H1 (cell line): ENCODE measurements at regions of chr20 and their contacts with region 1.

Region 1: GRCh38 chr20:41048461-41049301 is 20.1 kb downstream of the TOP1 start:
- DNase-seq: no peak
- H3K4me3 ChIP-seq: peak overlapping the region in 1 of 4 experiments; percentile 3; a peak in 1 of 8 replicates
- H3K27ac ChIP-seq: no peak overlapping the region
- H3K4me1 ChIP-seq: peaks cover 5 to 25% (median 11%) of the 10 kb centered on the region in 4 experiments; a peak in 4 of 7 replicates
- H3K27me3 ChIP-seq: no peaks in the 10 kb centered on the region
- CTCF ChIP-seq: no peak
- EP300 ChIP-seq: no peak
- POLR2A ChIP-seq: no peak
- RAD21 ChIP-seq: no peak

Region 2: GRCh38 chr20:40922865-40923264 is 125.8 kb before region 1 on chr20:
- CTCF ChIA-PET with region 1: no interaction called
- POLR2A ChIA-PET with region 1: no interaction called
- DNase-seq: no peak
- H3K4me3 ChIP-seq: no peak overlapping the region
- H3K27ac ChIP-seq: no peak overlapping the region
- H3K4me1 ChIP-seq: no peaks in the 10 kb centered on the region
- H3K27me3 ChIP-seq: no peaks in the 10 kb centered on the region
- CTCF ChIP-seq: no peak
- EP300 ChIP-seq: no peak
- POLR2A ChIP-seq: no peak
- RAD21 ChIP-seq: no peak

Region 3: DNA sequence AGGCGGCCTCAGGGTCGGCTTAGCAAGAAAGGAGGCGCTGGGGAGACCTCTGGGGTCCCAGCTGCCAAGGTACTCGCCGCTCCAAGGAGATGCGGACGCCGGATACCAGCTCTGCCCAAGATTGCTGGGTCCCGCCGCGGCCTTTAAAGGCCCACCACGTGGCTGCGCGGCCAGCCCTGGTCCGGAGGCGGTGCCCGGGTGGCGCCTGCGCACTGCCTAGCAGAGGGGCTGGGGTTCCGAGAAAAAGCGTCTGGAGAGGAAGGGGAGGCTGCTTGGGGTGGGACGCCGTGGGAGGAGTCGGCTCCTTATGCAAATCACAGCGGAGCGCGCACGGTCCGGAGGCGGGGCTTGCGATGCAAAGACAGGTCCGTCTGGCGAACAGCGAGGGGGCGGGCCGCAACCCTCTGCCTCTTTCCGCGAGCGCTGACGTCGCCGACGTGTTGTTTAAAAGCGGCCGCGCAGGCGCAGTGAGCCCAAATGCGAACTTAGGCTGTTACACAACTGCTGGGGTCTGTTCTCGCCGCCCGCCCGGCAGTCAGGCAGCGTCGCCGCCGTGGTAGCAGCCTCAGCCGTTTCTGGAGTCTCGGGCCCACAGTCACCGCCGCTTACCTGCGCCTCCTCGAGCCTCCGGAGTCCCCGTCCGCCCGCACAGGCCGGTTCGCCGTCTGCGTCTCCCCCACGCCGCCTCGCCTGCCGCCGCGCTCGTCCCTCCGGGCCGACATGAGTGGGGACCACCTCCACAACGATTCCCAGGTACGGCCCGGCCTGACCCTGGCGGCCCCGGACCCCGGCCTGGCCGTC is 20.1 kb before region 1 on chr20 and contains the start of gene TOP1:
- CTCF ChIA-PET with region 1: interaction called, 3 read pairs
- POLR2A ChIA-PET with region 1: interaction called, 45 read pairs
- DNase-seq: peak; percentile 100
- H3K4me3 ChIP-seq: peak within 1 kb of the TSS; percentile 56 to 97 (median 67)
- H3K27ac ChIP-seq: peak within 1 kb of the TSS; percentile 93
- H3K4me1 ChIP-seq: peaks cover 3 to 9% (median 7%) of the 10 kb centered on the region in 4 experiments; a peak in 4 of 7 replicates
- H3K27me3 ChIP-seq: peaks cover 0 to 24% (median 10%) of the 10 kb centered on the region in 4 experiments; a peak in 3 of 7 replicates
- CTCF ChIP-seq: no peak; a peak in 1 of 4 replicates
- EP300 ChIP-seq: 0 out of 3 replicates have a peak, but pooled peaks of 1 of the 2 experiments have one; percentile 45
- POLR2A ChIP-seq: peak; percentile 90 to 97
- RAD21 ChIP-seq: no peak
- total RNA-seq, gene TOP1: 108 and 114 TPM in 2 replicates

Region 4: GRCh38 chr20:41714030-41714429 is 665.3 kb after region 1 on chr20:
- CTCF ChIA-PET with region 1: no interaction called
- POLR2A ChIA-PET with region 1: no interaction called
- DNase-seq: no peak
- H3K4me3 ChIP-seq: no peak overlapping the region
- H3K27ac ChIP-seq: no peak overlapping the region
- H3K4me1 ChIP-seq: no peaks in the 10 kb centered on the region
- H3K27me3 ChIP-seq: no peaks in the 10 kb centered on the region
- CTCF ChIP-seq: no peak
- EP300 ChIP-seq: no peak
- POLR2A ChIP-seq: no peak
- RAD21 ChIP-seq: no peak